ENCODE measurements at regions of chr7 and their contacts with region 1.

Region 1: GRCh38 chr7:151459726-151460473 is 20.0 kb upstream of the CRYGN start:
- DNase-seq: peak; percentile 84 to 96 (median 93)
- H3K4me3 ChIP-seq: peak overlapping the region in 1 of 4 donors; percentile 32
- H3K27ac ChIP-seq: peak overlapping the region; percentile 93 to 98 (median 95)
- H3K4me1 ChIP-seq: peaks cover 19 to 28% of the 10 kb centered on the region in 2 donors
- H3K27me3 ChIP-seq: no peaks in the 10 kb centered on the region
- CTCF ChIP-seq: peak in 5 of 6 experiments; percentile 13 to 45 (median 26)
- POLR2A ChIP-seq: peak; percentile 18 to 87

Region 2: DNA sequence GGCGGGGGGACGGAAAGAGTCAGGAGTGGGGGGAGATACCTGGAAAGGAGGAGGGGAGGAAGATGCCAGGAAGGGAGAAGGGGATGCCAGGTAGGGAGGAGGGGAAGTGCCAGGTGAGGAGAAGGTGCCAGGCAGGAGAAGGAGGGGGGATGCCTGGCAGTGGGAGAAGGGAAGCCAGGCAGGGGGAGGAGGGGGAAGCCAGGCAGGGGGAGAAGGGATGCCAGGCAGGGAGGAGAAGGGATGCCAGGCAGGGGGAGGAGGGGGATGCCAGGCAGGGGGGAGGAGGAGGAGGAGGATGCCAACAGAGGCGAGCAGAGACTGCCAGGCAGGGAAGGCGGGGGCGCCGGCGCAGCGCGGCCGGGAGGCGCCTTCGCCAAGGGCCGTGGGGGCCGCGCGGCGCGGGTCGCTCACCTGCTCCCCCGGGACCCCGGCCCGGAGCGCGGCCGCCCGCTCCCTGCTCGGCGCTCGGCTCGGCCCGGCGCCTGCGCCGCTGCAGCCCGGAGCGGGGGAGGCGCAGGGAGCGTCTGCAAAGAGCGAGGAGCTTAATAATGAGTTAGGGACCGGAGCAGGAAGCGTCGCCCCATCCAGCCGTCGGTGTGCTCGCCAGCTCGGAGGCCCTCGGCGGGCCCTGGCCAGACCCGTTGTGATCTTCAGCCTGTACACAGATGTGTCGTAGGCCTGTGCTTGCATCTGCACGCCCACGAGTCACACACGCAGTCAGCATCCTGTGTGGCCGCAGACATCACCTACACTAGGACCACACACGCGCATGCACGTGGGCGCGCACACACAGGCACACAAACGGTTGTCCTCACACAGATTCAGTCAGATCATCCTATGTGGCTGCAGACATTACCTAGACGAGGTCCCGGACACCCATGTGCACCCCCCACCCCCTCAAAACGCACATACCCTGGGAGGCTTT is 183.0 kb before region 1 on chr7:
- intact Hi-C with region 1: no loop called
- DNase-seq: peak; percentile 41 to 64 (median 55)
- H3K4me3 ChIP-seq: peak overlapping the region in 1 of 4 donors; percentile 57
- H3K27ac ChIP-seq: peak overlapping the region in 1 of 5 donors; percentile 66
- H3K4me1 ChIP-seq: peaks cover 5 to 12% of the 10 kb centered on the region in 2 donors
- H3K27me3 ChIP-seq: no peaks in the 10 kb centered on the region
- CTCF ChIP-seq: no peak
- POLR2A ChIP-seq: no peak

Region 3: GRCh38 chr7:151426486-151426905 is 33.4 kb before region 1 on chr7:
- intact Hi-C with region 1: no loop called
- DNase-seq: peak; percentile 57 to 88 (median 86)
- H3K4me3 ChIP-seq: peak overlapping the region in 1 of 4 donors; percentile 23
- H3K27ac ChIP-seq: peak overlapping the region in 2 of 5 donors; percentile 79 to 93
- H3K4me1 ChIP-seq: peaks cover 0 to 16% of the 10 kb centered on the region in 2 donors
- H3K27me3 ChIP-seq: no peaks in the 10 kb centered on the region
- CTCF ChIP-seq: no peak
- POLR2A ChIP-seq: no peak

Region 4: DNA sequence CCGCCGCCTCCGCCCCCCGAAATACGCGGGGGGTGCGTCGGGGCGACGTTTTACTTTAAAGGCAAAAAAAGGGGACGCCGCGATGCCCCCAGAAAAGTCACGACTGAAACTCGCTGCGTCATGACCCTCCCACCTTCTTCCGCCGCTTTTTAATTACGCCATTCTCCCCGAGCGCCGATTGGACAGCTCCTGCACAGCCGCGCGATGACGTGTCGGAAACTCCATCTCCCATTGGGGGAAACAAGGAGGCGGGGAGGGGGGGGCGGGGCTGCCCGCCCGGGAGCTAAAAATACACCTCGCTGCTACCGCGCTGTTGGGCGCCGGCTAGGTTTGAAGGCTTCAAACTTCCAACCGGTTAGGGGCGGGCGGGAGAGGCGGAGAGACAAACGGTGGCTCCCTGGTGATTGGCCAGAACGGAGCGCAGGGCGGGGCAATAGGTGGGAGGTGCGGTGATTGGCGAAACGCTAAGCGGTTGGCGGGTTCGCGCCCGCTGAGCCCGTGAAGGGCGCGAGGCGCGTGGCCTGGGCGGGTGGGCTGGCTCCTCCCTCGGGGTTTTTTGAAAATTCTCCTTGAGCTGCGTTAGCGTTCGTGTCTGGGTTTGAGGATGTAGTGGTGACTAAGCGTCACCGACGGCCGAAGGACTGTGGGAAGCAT is 60.0 kb after region 1 on chr7 and contains the start of gene RHEB:
- intact Hi-C with region 1: loop called (anchors 10 kb)
- DNase-seq: peak; percentile 99 to 100 (median 99)
- H3K4me3 ChIP-seq: peak within 1 kb of the TSS; percentile 17 to 89 (median 39)
- H3K27ac ChIP-seq: peak within 1 kb of the TSS; percentile 93 to 100 (median 99)
- H3K4me1 ChIP-seq: peaks cover 15 to 42% of the 10 kb centered on the region in 2 donors
- H3K27me3 ChIP-seq: no peaks in the 10 kb centered on the region
- CTCF ChIP-seq: no peak
- POLR2A ChIP-seq: peak in 1 of 2 donors; percentile 56
- total RNA-seq, gene RHEB: 83.8 to 177 (median 131) TPM

Region 5: GRCh38 chr7:152056621-152057274 is 596.8 kb after region 1 on chr7:
- intact Hi-C with region 1: no loop called
- DNase-seq: no peak
- H3K4me3 ChIP-seq: no peak overlapping the region
- H3K27ac ChIP-seq: no peak overlapping the region
- H3K4me1 ChIP-seq: no peaks in the 10 kb centered on the region
- H3K27me3 ChIP-seq: no peaks in the 10 kb centered on the region
- CTCF ChIP-seq: no peak
- POLR2A ChIP-seq: no peak